Activated B cell treated with CpG ODN at 0.5 μM for 24 hours (primary cell): ENCODE measurements at regions of chr6 and their contacts with region 1.

Region 1: DNA sequence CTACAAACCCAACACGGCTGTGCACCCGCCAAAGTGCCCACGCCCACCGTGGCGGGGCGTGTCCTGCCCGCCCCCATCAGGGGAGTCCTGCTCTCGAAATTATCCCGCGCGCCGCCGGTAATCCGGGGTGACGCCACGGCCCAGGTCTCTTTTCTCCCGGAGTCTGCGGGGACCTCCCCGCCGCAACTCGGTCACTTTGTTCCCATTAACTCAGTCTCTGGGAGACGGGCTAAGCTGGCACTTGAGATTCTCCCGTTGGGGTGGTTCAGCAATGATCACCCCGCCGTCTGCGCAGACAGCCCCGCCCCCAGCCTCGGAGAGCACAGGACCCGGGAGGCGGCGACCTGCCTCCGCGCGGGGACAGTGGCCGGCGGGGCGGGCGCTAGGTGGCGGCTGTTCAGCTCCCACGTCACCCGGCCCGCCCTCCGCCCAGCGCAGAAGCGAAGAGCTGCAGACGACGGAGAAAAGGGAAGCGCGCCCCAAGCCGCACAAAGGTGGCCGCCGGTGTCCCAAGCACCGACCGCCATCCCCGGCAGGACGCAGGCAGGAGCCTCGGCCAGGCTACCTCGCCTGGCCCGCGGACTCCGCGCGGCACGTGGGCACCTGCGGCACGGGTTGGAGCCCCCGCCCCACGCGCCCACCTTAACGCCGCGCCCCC is 31.5 kb downstream of the SF3B5 start:
- DNase-seq: peak; percentile 91
- ATAC-seq: peak; percentile 93
- H3K4me3 Mint-ChIP-seq: peak overlapping the region; percentile 94
- H3K27ac Mint-ChIP-seq: peak overlapping the region; percentile 89
- H3K4me1 Mint-ChIP-seq: peaks cover 36% of the 10 kb centered on the region
- H3K27me3 Mint-ChIP-seq: no peaks in the 10 kb centered on the region
- CTCF ChIP-seq: no peak

Region 2: GRCh38 chr6:143060354-143060805 is 1003.5 kb before region 1 on chr6:
- CTCF ChIA-PET with region 1: no interaction called
- POLR2A ChIA-PET with region 1: no interaction called
- intact Hi-C with region 1: loop called (anchors 5 kb)
- DNase-seq: peak; percentile 74
- ATAC-seq: peak; percentile 63
- H3K4me3 Mint-ChIP-seq: peak overlapping the region; percentile 93
- H3K27ac Mint-ChIP-seq: peak overlapping the region; percentile 86
- H3K4me1 Mint-ChIP-seq: peaks cover 20% of the 10 kb centered on the region
- H3K27me3 Mint-ChIP-seq: no peaks in the 10 kb centered on the region
- CTCF ChIP-seq: no peak

Region 3: DNA sequence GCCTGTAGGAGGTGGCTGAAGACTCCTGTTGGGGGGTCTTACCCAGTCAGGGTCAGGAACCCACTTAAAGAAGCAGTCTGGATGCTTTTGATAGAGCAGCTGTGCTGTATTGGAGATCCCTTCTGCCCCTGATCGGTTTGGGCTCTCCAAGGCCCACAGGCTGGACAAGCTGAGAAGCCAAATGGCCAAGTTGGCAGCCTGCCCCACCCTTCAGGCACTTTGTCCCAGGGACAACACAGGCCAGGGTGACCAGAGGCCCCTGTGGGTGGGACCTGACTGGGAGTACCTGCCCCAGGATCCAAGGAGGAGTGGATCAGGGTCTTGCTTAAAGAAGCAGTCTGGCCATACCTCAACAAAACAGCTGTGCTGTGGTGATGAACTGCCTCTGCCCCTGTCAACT is 151.2 kb before region 1 on chr6:
- CTCF ChIA-PET with region 1: no interaction called
- POLR2A ChIA-PET with region 1: no interaction called
- intact Hi-C with region 1: no loop called
- DNase-seq: no peak
- ATAC-seq: no peak
- H3K4me3 Mint-ChIP-seq: no peak overlapping the region
- H3K27ac Mint-ChIP-seq: no peak overlapping the region
- H3K4me1 Mint-ChIP-seq: no peaks in the 10 kb centered on the region
- H3K27me3 Mint-ChIP-seq: no peaks in the 10 kb centered on the region
- CTCF ChIP-seq: no peak

Region 4: GRCh38 chr6:144086959-144087358 is 23.1 kb after region 1 on chr6:
- CTCF ChIA-PET with region 1: no interaction called
- POLR2A ChIA-PET with region 1: no interaction called
- intact Hi-C with region 1: no loop called
- DNase-seq: no peak
- ATAC-seq: no peak
- H3K4me3 Mint-ChIP-seq: no peak overlapping the region
- H3K27ac Mint-ChIP-seq: no peak overlapping the region
- H3K4me1 Mint-ChIP-seq: peaks cover 9% of the 10 kb centered on the region
- H3K27me3 Mint-ChIP-seq: no peaks in the 10 kb centered on the region
- CTCF ChIP-seq: no peak

Region 5: DNA sequence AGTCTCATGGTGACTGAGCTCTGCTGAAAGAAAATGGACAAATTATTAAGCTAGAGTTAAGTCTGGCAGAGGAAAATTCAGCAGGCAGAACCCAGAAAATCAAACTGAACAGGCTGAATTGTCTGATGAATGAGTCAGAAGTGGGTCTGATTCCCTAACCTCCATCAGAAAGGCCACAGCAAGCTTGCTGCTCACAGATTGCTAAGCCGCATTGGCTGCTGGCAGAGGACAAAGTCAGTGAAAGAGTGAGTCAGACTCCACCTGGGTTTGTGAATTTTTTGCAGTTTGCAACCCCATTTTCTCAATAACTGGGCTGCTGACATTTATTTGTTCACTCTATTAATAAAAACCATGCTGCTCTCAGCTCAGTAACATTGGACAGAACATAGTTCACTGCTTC is 1480.2 kb after region 1 on chr6:
- CTCF ChIA-PET with region 1: no interaction called
- POLR2A ChIA-PET with region 1: no interaction called
- intact Hi-C with region 1: no loop called
- DNase-seq: no peak
- ATAC-seq: no peak
- H3K4me3 Mint-ChIP-seq: no peak overlapping the region
- H3K27ac Mint-ChIP-seq: no peak overlapping the region
- H3K4me1 Mint-ChIP-seq: no peaks in the 10 kb centered on the region
- H3K27me3 Mint-ChIP-seq: peaks cover 2% of the 10 kb centered on the region
- CTCF ChIP-seq: no peak